ENCODE measurements at regions of chr22 and their contacts with region 1.

Region 1: DNA sequence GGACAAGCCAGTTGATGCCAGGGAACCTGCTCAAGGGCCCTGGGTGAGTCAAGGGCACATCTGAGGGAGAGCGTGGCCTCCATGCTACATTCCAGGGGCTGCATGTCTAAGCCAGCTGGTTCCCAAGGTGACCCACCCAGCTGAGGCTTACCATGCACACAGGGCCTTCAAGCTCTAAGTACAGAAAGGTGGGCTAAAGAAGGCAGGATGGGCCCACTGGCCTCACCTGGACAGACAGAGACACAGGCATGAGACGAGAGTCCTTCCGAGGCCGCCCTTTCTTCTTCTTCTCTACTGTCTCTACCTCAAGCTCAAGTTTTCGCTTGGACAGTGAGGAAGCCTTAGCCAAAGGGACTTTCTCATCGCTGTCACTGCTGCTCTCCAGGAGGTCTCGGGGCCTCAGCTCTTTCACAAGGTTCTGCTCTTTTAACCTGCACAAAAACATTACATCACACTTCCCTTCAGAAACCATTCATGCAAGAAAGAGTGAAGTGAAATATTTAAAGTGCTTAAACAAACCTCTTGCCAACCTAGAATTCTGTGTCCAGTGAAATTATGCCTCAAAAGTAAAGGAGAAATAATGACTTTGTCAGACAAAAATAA is 69.9 kb downstream of the HIRA start:
- DNase-seq: no peak
- ATAC-seq: no peak
- H3K4me3 ChIP-seq: no peak overlapping the region
- H3K27ac ChIP-seq: no peak overlapping the region
- H3K4me1 ChIP-seq: no peaks in the 10 kb centered on the region
- H3K27me3 ChIP-seq: no peaks in the 10 kb centered on the region
- CTCF ChIP-seq: no peak

Region 2: DNA sequence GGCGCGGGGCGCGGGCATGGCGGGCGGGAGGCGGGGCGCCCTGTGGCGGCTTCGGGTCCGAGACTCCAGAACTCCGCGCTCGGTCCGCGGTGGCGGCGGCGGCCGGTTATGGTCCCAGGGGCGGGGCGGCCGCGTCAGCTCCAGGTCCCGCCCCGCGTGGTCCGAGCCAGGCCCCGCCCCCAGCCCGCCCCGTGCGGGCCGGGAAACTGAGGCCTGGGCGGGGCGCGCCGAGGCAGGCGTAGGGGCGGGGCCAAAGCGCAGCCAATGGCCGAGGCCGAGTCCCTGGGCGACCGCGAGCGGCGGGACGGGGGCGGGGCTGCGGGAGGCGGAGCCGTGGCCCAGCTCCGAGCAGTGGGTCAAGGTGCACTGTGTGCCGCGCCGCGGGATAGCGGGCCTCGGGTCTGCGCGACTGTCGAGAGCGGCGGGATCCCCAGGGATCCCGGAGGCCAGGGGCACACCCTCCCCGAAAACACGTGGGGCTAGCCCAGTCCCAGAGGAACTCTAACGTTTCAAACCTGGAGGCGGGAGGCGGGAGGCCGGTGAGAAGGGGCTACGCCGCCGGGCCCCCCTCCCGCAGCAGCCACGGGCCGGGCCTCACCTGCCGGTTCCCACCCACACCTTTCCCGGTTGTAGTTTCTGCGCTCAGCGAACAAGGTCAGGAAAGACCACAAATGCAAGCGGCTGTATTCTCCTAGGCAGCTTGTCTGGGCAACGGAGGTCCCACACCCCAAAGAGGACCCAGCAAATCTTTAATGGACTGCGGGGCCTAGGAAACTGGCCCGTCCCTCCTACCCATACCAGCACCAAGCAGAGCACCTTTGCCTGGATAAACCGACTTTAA is 182.7 kb before region 1 on chr22 and contains the start of gene SLC25A1:
- intact Hi-C with region 1: loop called in 2 of 10 experiments (anchors 10 kb)
- DNase-seq: peak; percentile 90 to 95
- ATAC-seq: peak; percentile 87 to 94 (median 90)
- H3K4me3 ChIP-seq: peak within 1 kb of the TSS; percentile 66 to 96 (median 89)
- H3K27ac ChIP-seq: peak within 1 kb of the TSS; percentile 77 to 93 (median 88)
- H3K4me1 ChIP-seq: peaks cover 16 to 51% (median 37%) of the 10 kb centered on the region in 9 donors
- H3K27me3 ChIP-seq: no peaks in the 10 kb centered on the region
- CTCF ChIP-seq: no peak
- total RNA-seq, gene SLC25A1: 14.8 to 29.1 (median 19.9) TPM

Region 3: DNA sequence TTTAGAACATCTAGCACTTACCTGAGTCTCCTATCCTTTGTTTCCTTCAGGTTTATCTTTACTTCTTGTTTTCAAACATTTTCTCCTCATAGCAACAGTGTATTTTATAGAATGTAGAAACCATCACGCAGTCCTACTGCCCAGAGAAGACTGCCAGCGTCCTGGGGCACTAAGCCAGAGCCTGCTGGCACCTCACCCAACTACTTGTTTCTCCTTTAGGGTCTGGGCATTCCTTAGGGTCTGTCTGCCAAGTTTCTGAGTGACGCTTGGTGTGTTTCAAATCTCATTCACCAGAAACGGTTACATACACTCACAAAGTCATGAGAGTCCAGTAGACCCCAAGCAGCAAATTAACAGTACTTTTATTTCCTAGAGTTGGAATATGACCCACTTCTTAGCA is 133.4 kb before region 1 on chr22:
- intact Hi-C with region 1: loop called in 1 of 10 experiments (anchors 10 kb)
- DNase-seq: peak in 1 of 2 donors; percentile 35
- ATAC-seq: peak in 1 of 8 donors; percentile 73
- H3K4me3 ChIP-seq: no peak overlapping the region
- H3K27ac ChIP-seq: no peak overlapping the region
- H3K4me1 ChIP-seq: peaks cover 0 to 16% (median 4%) of the 10 kb centered on the region in 9 donors
- H3K27me3 ChIP-seq: no peaks in the 10 kb centered on the region
- CTCF ChIP-seq: no peak

Region 4: GRCh38 chr22:19304547-19304946 is 57.1 kb before region 1 on chr22:
- intact Hi-C with region 1: loop called in 1 of 10 experiments (anchors 10 kb)
- DNase-seq: no peak
- ATAC-seq: no peak
- H3K4me3 ChIP-seq: no peak overlapping the region
- H3K27ac ChIP-seq: no peak overlapping the region
- H3K4me1 ChIP-seq: no peaks in the 10 kb centered on the region
- H3K27me3 ChIP-seq: no peaks in the 10 kb centered on the region
- CTCF ChIP-seq: no peak

Measured in heart right ventricle (tissue), 16 donors.